Mucosa of descending colon (tissue), 3 donors: ENCODE measurements at regions of chr19 and their contacts with region 1.

Region 1: DNA sequence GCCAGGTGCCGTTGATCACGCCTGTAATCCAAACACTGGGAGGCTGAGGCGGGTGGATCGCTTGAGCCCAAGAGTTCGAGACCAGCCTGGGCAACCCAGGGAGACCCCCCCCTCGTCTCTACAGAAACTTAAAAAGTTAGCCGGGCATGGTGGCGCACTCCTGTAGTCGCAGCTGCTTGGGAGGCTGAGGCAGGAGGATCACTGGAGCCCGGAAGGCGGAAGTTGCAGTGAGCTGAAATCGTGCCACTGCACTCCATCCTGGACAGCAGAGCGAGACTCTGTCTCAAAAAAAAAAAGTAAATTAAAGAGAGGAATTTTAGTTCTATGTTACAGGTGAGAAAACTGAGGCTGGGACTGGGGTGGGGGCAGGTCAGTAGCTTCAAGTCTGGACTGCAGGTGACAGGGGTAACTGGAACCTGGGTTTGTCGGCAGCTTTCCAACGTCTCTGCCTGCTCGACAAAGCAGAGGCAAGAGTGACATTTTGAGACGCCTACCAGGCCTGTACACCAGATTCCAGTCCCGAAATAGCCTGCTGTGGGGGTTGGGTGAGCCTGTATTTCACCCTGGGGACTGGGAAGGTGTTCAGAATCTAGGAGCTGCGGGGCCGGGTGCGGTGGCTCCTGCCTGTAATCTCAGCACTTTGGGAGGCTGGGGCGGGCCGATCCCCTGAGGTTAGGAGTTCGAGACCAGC is 1.2 kb downstream of the SELENOW start:
- DNase-seq: peak in 2 of 3 donors; percentile 63 to 64
- ATAC-seq: no peak
- H3K4me3 ChIP-seq: peak overlapping the region; percentile 96
- H3K4me1 ChIP-seq: peaks cover 32% of the 10 kb centered on the region
- CTCF ChIP-seq: no peak

Region 2: GRCh38 chr19:47713046-47714021 is 66.3 kb before region 1 on chr19 and contains the start of gene EHD2:
- intact Hi-C with region 1: loop called in 1 of 2 experiments (anchors 10 kb)
- DNase-seq: peak in 2 of 3 donors; percentile 50 to 69
- ATAC-seq: peak; percentile 83
- H3K4me3 ChIP-seq: peak within 1 kb of the TSS; percentile 23
- H3K4me1 ChIP-seq: peaks cover 2% of the 10 kb centered on the region
- CTCF ChIP-seq: peak; percentile 78
- total RNA-seq, gene EHD2: 10.8 to 108 (median 30.3) TPM

Region 3: DNA sequence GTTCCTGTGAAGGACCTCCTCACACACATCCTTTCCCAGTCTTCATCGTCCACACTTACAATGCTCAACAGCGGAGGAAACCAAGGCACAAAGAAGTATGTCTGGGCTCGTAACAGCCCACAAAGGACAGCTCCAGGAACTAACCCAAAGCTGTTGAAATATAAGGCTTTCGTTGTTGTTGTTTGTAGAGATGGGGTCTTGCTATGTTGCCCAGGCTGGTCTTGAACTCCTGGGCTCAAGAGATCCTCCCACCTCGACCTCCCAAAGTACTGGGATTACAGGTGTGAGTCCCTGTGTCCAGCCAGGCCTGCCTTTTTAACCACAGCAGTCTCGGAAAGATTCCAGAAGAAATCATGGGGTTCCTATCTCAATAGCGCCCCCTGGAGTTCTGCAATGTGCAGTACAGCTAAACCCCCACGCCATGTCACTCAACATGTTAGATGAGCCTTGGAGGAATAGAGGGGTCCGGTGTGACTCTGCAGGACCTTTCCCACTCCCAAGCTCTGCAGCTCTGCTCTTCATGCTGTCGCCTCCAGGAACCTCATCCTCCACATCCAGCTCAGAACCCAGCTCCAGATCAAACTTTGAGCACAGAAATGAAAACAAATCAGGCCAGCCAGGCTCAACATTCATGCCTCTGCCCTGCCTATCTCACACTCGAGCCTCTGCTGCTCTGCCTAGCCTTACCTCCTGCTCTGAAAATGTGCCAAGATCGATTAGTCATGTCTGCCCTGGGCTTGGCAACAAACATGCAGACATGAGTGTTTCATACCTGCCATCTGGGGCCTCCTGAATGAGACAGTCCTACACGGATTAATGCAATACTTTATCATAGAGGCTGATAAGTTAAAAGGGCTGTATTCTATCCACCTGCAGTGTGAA is 323.4 kb after region 1 on chr19:
- intact Hi-C with region 1: no loop called
- DNase-seq: peak in 1 of 3 donors; percentile 67
- ATAC-seq: peak; percentile 59
- H3K4me3 ChIP-seq: no peak overlapping the region
- H3K4me1 ChIP-seq: no peaks in the 10 kb centered on the region
- CTCF ChIP-seq: peak; percentile 38